Psoas muscle (tissue), 8 donors: ENCODE measurements at regions of chr9 and their contacts with region 1.

Region 1: DNA sequence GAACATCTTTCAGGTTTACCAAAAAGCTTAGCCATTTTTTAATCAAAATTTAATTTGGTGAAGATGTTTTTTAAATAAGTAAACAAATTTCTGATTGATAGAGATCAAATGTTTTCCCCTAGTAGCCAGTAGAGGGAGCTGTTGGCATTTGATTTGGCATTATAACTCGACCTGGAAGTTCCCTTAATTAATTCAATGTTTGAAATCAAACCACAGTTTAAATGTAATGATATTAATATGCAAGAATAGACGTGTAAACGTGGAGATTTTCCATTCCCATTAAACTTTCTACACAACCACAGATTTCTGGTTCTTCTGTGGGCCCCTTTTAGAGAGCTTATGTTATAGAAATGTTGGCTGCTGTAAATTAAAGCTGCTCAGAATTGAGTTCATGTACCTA is 148.1 kb upstream of the MPDZ start:
- DNase-seq: no peak
- ATAC-seq: peak in 3 of 4 donors; percentile 40 to 79 (median 64)
- H3K4me3 ChIP-seq: peak overlapping the region; percentile 39
- H3K27ac ChIP-seq: peak overlapping the region; percentile 43
- H3K4me1 ChIP-seq: peaks cover 25% of the 10 kb centered on the region
- H3K27me3 ChIP-seq: no peaks in the 10 kb centered on the region
- CTCF ChIP-seq: peak; percentile 84

Region 2: DNA sequence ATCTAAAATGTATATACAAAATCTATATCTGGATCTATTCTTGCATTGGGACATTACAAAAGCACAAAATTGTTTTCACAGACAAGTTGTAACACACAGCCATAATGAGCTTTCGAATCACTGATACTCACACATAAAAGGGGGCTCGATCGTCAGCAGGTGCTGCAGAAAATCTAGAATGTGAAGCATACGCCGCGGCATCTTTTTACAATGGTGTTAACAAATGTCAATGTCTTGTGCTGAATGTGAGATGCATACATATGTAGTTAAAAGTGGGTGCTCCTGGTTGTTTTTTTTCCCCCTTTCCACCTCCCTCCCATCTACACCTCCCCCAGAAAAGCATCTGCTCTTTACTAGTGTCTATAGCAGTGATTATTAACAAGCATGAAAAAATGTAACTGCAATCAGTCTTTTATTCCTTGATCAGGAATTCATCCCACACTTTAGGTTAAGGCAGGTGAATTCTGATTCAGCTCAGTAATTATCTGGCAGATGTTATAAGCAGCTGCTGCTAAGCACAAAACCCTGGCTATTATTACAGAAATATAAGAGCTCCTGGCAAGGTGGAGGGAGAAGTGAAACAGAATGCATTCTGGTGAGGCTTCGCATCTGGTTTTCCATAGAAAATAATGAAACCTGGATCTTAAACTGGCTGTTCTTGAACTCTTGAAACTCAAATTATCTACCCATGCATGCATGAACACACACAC is 262.2 kb before region 1 on chr9:
- intact Hi-C with region 1: no loop called
- DNase-seq: no peak
- ATAC-seq: no peak
- H3K4me3 ChIP-seq: no peak overlapping the region
- H3K27ac ChIP-seq: no peak overlapping the region
- H3K4me1 ChIP-seq: peaks cover 2% of the 10 kb centered on the region
- H3K27me3 ChIP-seq: no peaks in the 10 kb centered on the region
- CTCF ChIP-seq: no peak

Region 3: DNA sequence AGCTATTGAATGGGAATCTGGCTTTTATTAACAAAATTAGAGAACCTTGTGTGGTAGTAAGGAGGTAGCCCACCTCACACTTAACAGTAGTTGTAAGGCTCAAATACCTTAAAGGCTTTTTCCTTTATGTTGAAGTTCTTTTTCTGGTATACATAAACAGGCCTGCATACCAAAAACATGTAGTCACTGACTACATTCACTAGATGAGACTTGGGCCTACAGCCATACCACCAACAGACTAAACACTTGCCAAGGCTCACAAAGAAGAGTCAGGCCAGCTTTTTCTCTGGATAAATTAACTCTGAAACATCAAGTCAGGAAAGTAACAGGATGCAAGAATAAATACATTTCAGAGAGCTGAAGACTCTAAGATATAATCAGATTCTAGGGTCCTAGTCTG is 69.5 kb before region 1 on chr9:
- intact Hi-C with region 1: no loop called
- DNase-seq: no peak
- ATAC-seq: peak in 1 of 4 donors; percentile 53
- H3K4me3 ChIP-seq: no peak overlapping the region
- H3K27ac ChIP-seq: peak overlapping the region; percentile 0
- H3K4me1 ChIP-seq: peaks cover 3% of the 10 kb centered on the region
- H3K27me3 ChIP-seq: no peaks in the 10 kb centered on the region
- CTCF ChIP-seq: no peak

Region 4: GRCh38 chr9:13688994-13689600 is 261.5 kb after region 1 on chr9:
- intact Hi-C with region 1: loop called in 1 of 2 experiments (anchors 5 kb)
- DNase-seq: no peak
- ATAC-seq: peak in 2 of 4 donors; percentile 44 to 52
- H3K4me3 ChIP-seq: no peak overlapping the region
- H3K27ac ChIP-seq: peak overlapping the region; percentile 74
- H3K4me1 ChIP-seq: peaks cover 37% of the 10 kb centered on the region
- H3K27me3 ChIP-seq: no peaks in the 10 kb centered on the region
- CTCF ChIP-seq: peak; percentile 54

Region 5: GRCh38 chr9:14096258-14096922 is 668.8 kb after region 1 on chr9:
- intact Hi-C with region 1: loop called (anchors 10 kb)
- DNase-seq: no peak
- ATAC-seq: peak; percentile 46 to 70 (median 60)
- H3K4me3 ChIP-seq: peak overlapping the region; percentile 5
- H3K27ac ChIP-seq: peak overlapping the region; percentile 52
- H3K4me1 ChIP-seq: peaks cover 16% of the 10 kb centered on the region
- H3K27me3 ChIP-seq: no peaks in the 10 kb centered on the region
- CTCF ChIP-seq: no peak

Region 6: DNA sequence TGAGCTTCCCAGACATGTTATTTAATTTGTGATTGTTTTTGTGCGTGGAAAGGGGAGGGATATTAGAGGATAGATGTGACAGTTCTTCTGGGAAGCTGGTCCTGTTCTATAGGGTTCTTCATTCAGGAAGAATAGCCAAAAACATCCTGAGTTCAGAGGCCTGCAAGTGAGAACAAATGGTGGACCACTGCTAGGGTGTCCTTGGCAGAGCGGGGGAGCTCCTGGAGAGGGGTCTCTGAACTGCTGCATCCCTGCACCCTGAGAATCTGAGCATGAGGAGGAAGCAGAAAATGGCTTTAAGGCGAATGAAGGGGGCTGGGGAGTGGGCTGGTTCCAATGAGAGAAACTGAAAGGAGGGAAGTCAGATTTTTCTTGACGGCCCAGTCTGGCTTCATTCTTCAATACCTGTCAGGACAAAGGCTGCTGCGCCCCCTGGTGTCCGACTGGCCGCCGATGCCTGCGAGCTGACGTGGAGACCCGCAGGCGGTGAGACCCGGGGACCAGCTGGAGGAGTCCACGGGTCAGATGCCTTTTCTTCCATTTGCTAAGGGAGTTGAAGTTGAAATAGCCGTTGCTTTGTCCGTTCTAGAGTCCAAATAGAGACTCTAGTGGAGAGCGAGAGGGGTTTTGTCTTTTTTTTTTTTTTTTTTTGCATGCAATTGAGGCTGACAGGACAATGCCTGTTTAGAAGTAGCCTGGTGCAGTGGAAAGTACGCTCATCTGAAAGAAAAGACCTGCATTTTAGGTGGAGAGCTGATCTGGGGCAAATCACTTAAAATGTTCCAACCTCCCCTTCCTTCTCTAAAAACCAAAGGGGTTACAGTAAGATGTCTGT is 925.9 kb after region 1 on chr9:
- intact Hi-C with region 1: loop called (anchors 1 to 5 kb)
- DNase-seq: peak; percentile 95 to 96
- ATAC-seq: peak; percentile 72 to 80 (median 77)
- H3K4me3 ChIP-seq: peak overlapping the region; percentile 38
- H3K27ac ChIP-seq: peak overlapping the region; percentile 59
- H3K4me1 ChIP-seq: peaks cover 23% of the 10 kb centered on the region
- H3K27me3 ChIP-seq: no peaks in the 10 kb centered on the region
- CTCF ChIP-seq: peak; percentile 94

Region 7: GRCh38 chr9:14400658-14400995 is 973.0 kb after region 1 on chr9:
- intact Hi-C with region 1: loop called (anchors 2 to 10 kb)
- DNase-seq: peak; percentile 56 to 73
- ATAC-seq: peak; percentile 73 to 85 (median 78)
- H3K4me3 ChIP-seq: peak overlapping the region; percentile 45
- H3K27ac ChIP-seq: peak overlapping the region; percentile 54
- H3K4me1 ChIP-seq: peaks cover 20% of the 10 kb centered on the region
- H3K27me3 ChIP-seq: no peaks in the 10 kb centered on the region
- CTCF ChIP-seq: peak; percentile 58